Activated T-helper 1 cell treated with anti-CD3 and anti-CD28 coated beads, Interleukin-12 subunit alpha, Interleukin-12 subunit beta, Interleukin-2, Interleukin-4 antibody, amounts not matched to agents 30 ng/mL and 10 ng/mL and 1 ng/mL, durations not matched to agents 14 hours and 24 hours and 36 hours (primary cell): ENCODE measurements at regions of chr14 and their contacts with region 1.

Region 1: GRCh38 chr14:22589096-22589839 is at the start of gene DAD1:
- DNase-seq: peak; percentile 100
- H3K4me3 Mint-ChIP-seq: peak within 1 kb of the TSS; percentile 91
- H3K27ac Mint-ChIP-seq: peak within 1 kb of the TSS; percentile 96
- H3K4me1 Mint-ChIP-seq: peaks cover 55% of the 10 kb centered on the region
- H3K27me3 Mint-ChIP-seq: no peaks in the 10 kb centered on the region
- total RNA-seq, gene DAD1: 228 and 229 TPM in 2 replicates

Region 2: DNA sequence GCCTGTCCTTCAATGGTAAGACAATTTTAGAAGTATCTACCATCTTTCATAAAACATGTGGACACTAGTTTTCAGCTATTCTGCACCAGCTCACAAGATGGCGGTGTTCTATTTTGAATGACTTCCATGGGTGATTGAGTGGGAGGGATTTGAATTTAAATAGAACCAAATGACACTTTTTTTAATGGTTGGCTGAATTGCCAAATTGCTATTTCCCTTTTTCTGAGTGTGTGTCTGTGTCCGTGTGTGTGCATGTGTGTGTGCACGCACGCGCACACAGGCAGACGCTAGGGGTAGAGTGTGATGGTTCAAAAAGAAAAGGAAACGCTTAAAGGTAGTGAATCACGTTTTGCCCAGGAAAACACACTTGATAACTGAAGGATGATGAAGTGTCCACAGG is 362.9 kb before region 1 on chr14:
- intact Hi-C with region 1: no loop called
- DNase-seq: no peak
- H3K4me3 Mint-ChIP-seq: peak overlapping the region; percentile 73
- H3K27ac Mint-ChIP-seq: peak overlapping the region; percentile 73
- H3K4me1 Mint-ChIP-seq: peaks cover 4% of the 10 kb centered on the region
- H3K27me3 Mint-ChIP-seq: no peaks in the 10 kb centered on the region

Region 3: GRCh38 chr14:22456998-22457594 is 132.2 kb before region 1 on chr14:
- intact Hi-C with region 1: no loop called
- DNase-seq: no peak
- H3K4me3 Mint-ChIP-seq: peak overlapping the region; percentile 51
- H3K27ac Mint-ChIP-seq: no peak overlapping the region
- H3K4me1 Mint-ChIP-seq: no peaks in the 10 kb centered on the region
- H3K27me3 Mint-ChIP-seq: no peaks in the 10 kb centered on the region

Region 4: GRCh38 chr14:22577334-22577908 is 11.8 kb before region 1 on chr14:
- intact Hi-C with region 1: loop called (anchors 1 kb)
- DNase-seq: no peak
- H3K4me3 Mint-ChIP-seq: no peak overlapping the region
- H3K27ac Mint-ChIP-seq: peak overlapping the region; percentile 32
- H3K4me1 Mint-ChIP-seq: peaks cover 55% of the 10 kb centered on the region
- H3K27me3 Mint-ChIP-seq: no peaks in the 10 kb centered on the region

Region 5: GRCh38 chr14:22737052-22737451 is 147.8 kb after region 1 on chr14:
- intact Hi-C with region 1: loop called (anchors 1 kb)
- DNase-seq: peak; percentile 43
- H3K4me3 Mint-ChIP-seq: peak overlapping the region; percentile 53
- H3K27ac Mint-ChIP-seq: peak overlapping the region; percentile 96
- H3K4me1 Mint-ChIP-seq: peaks cover 27% of the 10 kb centered on the region
- H3K27me3 Mint-ChIP-seq: peaks cover 6% of the 10 kb centered on the region

Region 6: GRCh38 chr14:22829661-22830442 is 240.6 kb after region 1 on chr14 and contains the start of gene MRPL52:
- intact Hi-C with region 1: loop called (anchors 1 kb)
- DNase-seq: peak; percentile 81
- H3K4me3 Mint-ChIP-seq: peak within 1 kb of the TSS; percentile 95
- H3K27ac Mint-ChIP-seq: peak within 1 kb of the TSS; percentile 91
- H3K4me1 Mint-ChIP-seq: peaks cover 33% of the 10 kb centered on the region
- H3K27me3 Mint-ChIP-seq: no peaks in the 10 kb centered on the region
- total RNA-seq, gene MRPL52: 187 and 196 TPM in 2 replicates

Region 7: DNA sequence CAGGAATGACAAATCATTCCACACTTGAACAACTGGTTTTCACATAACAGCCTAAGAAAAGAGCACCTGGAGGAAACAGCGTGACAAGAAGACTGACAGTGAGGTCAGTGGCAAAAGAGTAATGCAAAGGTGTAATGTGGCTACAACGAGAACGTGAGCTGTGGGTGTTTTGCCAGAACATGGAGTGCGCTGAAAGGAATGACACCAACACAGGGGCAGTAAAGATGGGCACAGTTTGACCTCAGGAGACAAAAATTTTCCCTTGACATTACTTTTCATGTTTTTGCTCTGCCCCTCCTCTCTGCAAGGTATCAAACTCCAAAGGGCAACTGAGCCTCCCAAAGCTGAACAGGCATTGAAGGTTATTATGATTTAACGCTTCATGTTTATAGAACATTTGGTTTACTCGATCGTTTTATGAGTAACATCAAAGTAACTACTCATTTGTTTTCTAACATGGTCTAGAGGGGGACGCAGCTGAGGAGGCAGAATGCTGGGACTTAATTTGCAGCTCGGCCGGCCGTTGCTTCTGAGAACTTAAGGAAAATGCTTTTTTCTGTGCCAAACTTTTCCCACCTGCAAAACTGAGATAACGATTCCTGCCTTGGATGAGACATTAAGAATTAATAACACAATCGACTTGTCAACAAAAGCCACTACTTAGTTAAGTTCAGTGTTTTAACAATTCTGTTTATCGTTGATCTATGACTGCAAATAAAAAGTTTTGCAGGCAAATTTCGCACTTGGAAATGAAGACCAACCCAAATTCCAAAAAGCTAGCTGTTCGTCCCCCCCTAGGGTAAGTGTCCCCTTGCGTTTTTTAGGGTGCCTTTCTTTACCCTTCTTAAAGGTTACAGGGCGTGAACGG is 366.7 kb after region 1 on chr14:
- intact Hi-C with region 1: loop called (anchors 1 kb)
- DNase-seq: no peak
- H3K4me3 Mint-ChIP-seq: peak overlapping the region; percentile 93
- H3K27ac Mint-ChIP-seq: peak overlapping the region; percentile 86
- H3K4me1 Mint-ChIP-seq: peaks cover 17% of the 10 kb centered on the region
- H3K27me3 Mint-ChIP-seq: peaks cover 3% of the 10 kb centered on the region